A673 (cell line): ENCODE measurements at regions of chr11 and their contacts with region 1.

Region 1: DNA sequence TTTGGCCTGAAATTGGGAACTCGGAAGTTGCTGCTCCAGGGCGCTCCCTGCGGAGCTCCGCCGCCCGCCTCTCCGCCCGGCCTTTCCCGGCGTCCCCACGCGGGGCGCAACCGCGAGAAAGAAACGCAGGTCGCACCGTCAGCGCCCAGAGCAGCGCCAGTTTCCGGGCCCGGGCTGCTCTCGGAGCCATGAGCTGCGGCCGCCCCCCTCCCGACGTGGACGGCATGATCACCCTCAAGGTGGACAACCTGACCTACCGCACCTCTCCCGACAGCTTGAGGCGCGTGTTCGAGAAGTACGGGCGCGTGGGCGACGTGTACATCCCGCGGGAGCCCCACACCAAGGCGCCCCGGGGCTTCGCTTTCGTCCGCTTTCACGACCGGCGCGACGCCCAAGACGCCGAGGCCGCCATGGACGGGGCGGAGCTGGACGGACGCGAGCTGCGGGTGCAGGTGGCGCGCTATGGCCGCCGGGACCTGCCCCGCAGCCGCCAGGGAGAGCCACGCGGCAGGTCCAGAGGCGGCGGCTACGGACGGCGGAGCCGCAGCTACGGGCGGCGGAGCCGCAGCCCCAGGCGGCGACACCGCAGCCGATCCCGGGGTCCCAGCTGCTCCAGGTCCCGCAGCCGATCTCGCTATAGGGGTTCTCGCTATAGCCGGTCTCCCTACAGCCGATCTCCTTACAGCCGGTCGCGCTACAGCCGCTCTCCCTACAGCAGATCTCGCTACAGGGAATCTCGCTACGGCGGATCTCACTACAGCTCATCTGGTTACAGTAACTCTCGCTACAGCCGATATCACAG is 521 bp downstream of the SRSF8 start:
- DNase-seq: peak; percentile 89
- H3K4me3 ChIP-seq: peak overlapping the region; percentile 68
- H3K27ac ChIP-seq: peak overlapping the region; percentile 86
- H3K4me1 ChIP-seq: peaks cover 9% of the 10 kb centered on the region
- H3K27me3 ChIP-seq: no peaks in the 10 kb centered on the region
- CTCF ChIP-seq: peak; percentile 64

Region 2: GRCh38 chr11:95089620-95090542 is 22.6 kb after region 1 on chr11 and contains the start of gene ENDOD1:
- CTCF ChIA-PET with region 1: interaction called, 6 read pairs
- POLR2A ChIA-PET with region 1: no interaction called
- intact Hi-C with region 1: loop called (anchors 1 kb)
- DNase-seq: peak; percentile 94
- H3K4me3 ChIP-seq: peak within 1 kb of the TSS; percentile 69
- H3K27ac ChIP-seq: peak within 1 kb of the TSS; percentile 22
- H3K4me1 ChIP-seq: peaks cover 3% of the 10 kb centered on the region
- H3K27me3 ChIP-seq: no peaks in the 10 kb centered on the region
- CTCF ChIP-seq: 0 out of 2 replicates have a peak, but pooled peaks have one; percentile 14
- total RNA-seq, gene ENDOD1: 6.1 and 7.3 TPM in 2 replicates

Region 3: DNA sequence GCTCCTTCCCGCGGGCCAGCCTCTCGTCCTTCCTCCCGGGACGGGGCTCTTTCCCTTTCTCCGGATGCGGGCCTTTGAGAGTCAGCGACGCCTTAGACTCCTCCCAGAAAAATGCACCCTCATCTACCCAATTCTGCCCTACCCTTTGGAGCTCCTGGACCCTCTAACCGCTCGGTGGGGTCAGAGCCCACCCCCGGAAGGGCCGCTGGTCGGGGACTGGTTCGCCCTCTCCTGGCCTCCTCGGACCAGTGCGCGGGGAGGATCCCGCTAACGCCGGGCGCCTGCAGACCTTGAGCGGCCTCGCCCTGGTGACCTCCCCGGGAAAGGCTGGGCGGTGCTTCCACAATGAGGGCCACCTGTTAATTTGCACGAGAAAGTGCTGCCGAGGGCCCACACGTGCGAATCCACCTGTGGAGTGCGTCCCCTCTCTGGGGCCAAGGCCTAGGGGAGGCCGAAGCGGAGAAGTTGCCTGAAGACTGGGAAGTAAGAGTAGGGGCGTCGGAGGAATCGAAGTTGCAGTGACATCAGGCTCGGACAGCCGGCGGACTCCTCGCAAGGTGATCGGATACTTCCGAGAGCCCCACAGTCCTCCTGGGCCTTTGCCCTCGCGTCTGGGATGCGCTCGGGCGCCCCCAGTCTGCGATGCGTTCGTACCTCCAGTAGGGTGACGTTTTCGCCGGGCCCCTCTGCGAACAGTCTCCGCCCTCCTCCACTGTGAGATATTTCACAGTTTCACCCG is 83.9 kb after region 1 on chr11:
- CTCF ChIA-PET with region 1: interaction called, 10 read pairs
- POLR2A ChIA-PET with region 1: no interaction called
- intact Hi-C with region 1: loop called (anchors 1 kb)
- DNase-seq: peak; percentile 96
- H3K4me3 ChIP-seq: peak overlapping the region; percentile 52
- H3K27ac ChIP-seq: no peak overlapping the region
- H3K4me1 ChIP-seq: peaks cover 11% of the 10 kb centered on the region
- H3K27me3 ChIP-seq: no peaks in the 10 kb centered on the region
- CTCF ChIP-seq: peak; percentile 93

Region 4: GRCh38 chr11:95764267-95764898 is 697.1 kb after region 1 on chr11:
- CTCF ChIA-PET with region 1: no interaction called
- POLR2A ChIA-PET with region 1: no interaction called
- intact Hi-C with region 1: loop called (anchors 1 kb)
- DNase-seq: peak; percentile 77
- H3K4me3 ChIP-seq: no peak overlapping the region
- H3K27ac ChIP-seq: no peak overlapping the region
- H3K4me1 ChIP-seq: no peaks in the 10 kb centered on the region
- H3K27me3 ChIP-seq: no peaks in the 10 kb centered on the region
- CTCF ChIP-seq: peak; percentile 86